Activated CD4-positive, alpha-beta memory T cell treated with anti-CD3 and anti-CD28 coated beads, Interleukin-2, amount 10 ng/mL, durations not matched to agents 7 days and 5 days (primary cell): ENCODE measurements at regions of chr1 and their contacts with region 1.

Region 1: DNA sequence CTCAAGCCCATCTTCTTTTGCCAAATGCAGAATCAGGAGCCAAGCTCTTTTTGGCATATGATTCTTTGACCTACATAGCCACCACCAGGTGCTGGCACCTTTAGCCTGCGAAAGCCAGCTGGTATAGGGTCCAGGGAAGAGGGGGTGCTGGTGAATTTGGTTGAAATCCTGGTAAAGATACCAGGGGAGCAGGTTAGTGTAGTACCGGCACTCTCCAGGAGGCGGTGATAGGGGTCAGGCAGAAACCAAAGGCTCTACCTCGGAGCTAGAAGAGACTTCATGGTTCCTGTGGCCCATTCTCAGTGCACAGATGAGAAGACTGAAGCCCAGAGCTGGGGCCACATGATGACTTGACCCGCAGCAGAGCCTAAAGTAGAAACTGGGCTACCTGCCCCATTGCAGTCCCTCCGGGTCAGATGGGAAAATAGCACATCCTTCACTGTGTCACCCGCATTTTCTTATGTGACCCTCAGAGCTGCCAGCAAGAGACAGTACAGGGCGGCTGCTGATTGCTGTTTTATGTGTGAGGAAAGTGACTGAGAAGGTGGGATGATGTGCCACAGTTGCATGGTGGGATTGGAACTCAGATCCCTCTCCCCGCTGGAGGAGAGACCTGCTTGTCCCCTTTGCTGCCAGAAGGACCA is 36.0 kb upstream of the IL19 start:
- DNase-seq: peak; percentile 82
- H3K4me3 Mint-ChIP-seq: no peak overlapping the region
- H3K27ac Mint-ChIP-seq: peak overlapping the region; percentile 34
- H3K4me1 Mint-ChIP-seq: peaks cover 71% of the 10 kb centered on the region
- H3K27me3 Mint-ChIP-seq: no peaks in the 10 kb centered on the region

Region 2: DNA sequence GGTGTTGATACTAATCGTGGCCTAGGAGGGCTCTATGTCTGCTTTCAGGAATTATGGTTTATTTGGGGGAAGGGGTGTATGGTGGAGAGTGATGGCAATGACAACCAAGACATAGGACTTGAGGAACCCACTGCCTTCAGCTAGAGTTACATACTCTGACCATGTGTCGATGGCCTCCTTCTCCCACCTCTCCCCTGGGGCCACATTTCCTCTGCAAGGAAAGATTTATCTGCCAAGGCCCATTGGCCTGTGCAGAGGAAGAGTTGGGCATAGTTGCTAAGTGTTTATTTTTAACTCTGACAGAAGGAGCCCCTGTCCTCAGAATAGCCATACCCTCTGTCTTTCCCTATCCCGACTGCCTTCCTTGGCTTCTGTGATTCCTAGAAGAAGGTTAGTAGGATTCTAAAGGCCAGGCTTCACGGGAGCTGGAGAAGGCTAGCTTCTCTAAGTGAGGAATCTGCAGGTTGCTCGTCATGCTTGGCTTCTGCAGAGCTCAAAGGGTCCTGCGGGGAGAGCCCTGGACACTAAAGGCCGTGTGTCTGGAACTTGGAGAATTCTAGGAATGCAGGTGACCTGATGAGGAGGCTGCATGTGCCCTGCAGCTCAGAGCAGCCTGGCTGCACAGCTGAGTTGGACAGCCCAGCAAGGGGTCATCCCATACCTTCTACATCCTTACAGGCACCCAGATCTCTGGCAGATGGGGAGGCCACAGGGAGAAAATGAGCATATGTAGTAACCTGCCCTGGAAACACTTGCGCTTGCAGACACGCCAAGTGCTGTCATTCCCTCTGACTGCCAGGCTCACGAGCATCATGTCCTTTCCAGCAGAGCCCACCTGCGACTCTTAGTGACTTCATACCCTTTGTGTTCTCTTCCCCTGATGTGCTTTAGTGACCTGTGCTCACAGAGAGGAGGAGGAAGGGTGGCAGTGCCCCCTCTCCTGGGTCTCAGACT is 40.2 kb before region 1 on chr1:
- CTCF ChIA-PET with region 1: no interaction called
- POLR2A ChIA-PET with region 1: no interaction called
- DNase-seq: no peak
- H3K4me3 Mint-ChIP-seq: no peak overlapping the region
- H3K27ac Mint-ChIP-seq: no peak overlapping the region
- H3K4me1 Mint-ChIP-seq: peaks cover 54% of the 10 kb centered on the region
- H3K27me3 Mint-ChIP-seq: no peaks in the 10 kb centered on the region

Region 3: DNA sequence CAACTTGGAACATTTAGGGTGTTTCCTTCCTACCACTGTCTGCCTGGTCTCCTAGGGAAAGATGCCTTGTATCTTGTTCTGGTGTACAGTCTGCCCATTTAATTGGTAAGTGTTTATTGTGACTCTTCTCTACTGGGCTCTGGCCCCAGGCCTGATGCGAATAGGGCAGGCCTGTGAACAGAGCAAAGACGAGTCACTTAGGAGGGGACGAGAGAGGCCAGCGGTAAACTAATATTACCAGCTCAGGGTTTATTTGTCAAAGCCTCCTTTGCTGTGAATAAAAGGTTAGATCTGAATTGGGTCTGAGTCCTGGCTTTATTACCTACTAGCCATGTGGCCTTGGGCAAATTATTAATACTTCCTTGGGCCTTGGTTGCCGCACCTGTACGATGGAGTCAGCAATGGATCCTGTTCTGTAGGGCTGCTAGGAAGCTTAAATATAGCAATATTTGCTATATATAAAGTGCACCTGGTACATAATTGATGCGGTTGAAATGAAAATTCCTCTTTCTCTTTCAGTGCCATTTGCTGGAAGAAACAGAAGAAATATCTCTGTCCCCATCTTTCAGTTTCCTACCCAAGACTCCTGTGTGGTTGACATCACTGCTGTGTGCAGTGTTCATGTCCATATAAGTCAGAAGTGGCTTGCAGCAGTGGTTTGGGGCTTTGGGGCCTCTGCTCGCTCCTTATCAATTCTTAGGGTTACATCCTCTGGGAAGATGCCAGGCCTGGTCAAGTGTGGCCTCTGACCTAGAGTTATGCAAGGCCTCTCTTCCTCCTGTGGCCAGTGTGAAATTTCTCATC is 17.5 kb before region 1 on chr1:
- CTCF ChIA-PET with region 1: interaction called, 12 read pairs
- POLR2A ChIA-PET with region 1: interaction called, 3 read pairs
- DNase-seq: peak; percentile 52
- H3K4me3 Mint-ChIP-seq: no peak overlapping the region
- H3K27ac Mint-ChIP-seq: peak overlapping the region; percentile 80
- H3K4me1 Mint-ChIP-seq: peaks cover 78% of the 10 kb centered on the region
- H3K27me3 Mint-ChIP-seq: no peaks in the 10 kb centered on the region

Region 4: DNA sequence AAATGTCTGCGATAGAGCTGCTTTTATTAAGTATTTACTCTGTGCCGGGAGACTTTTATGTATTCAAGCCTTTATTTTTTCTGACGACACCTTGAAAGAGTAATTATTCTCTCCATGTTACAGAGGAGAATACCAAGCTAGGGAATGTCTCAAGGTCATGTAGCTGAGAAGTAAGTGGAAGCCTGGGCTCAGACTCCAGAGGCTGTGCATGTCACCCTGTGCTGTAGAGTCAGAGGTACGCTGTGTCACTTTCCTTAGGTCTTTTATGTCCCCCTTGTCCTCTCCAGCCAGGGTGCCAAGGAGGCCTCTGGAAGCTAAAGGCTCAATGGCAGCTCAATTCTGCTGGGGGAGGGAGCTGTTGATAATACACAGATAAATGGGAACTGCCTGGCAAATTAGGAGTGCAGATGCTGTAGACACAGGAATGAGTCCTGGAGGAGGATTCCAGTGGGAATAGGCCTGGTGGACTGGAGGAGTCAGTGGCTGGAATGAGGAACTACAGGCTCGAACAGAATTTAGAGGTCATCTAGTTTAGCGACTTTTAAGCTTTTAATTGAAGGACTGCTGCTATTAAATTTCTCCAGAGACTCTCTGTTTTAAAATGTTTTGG is 26.6 kb after region 1 on chr1:
- CTCF ChIA-PET with region 1: interaction called, 41 read pairs
- POLR2A ChIA-PET with region 1: interaction called, 14 read pairs
- DNase-seq: no peak
- H3K4me3 Mint-ChIP-seq: no peak overlapping the region
- H3K27ac Mint-ChIP-seq: no peak overlapping the region
- H3K4me1 Mint-ChIP-seq: peaks cover 38% of the 10 kb centered on the region
- H3K27me3 Mint-ChIP-seq: peaks cover 19% of the 10 kb centered on the region

Region 5: DNA sequence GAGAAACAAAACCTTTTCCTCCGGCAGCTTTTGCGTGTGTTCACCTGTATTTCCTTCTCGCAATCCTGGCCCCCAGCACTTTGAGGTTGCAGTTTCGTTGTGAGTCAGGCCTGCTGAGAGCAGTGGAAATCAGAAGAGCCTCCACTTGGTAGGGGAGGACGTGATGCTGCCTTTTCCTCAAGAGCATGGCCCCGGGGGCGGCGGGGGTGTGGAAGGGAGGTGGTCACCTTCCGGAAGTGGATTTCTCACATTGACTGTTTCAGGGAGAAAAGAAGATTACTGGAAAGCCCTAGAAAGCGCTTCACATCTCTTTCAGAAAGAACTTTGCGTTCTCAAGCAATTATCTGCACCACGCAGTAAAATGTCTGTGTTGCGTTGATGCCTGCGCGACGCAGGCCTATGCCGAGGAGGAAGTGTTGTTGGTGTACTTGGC is 49.9 kb after region 1 on chr1:
- CTCF ChIA-PET with region 1: interaction called, 20 read pairs
- POLR2A ChIA-PET with region 1: interaction called, 9 read pairs
- DNase-seq: peak; percentile 94
- H3K4me3 Mint-ChIP-seq: peak overlapping the region; percentile 53
- H3K27ac Mint-ChIP-seq: peak overlapping the region; percentile 90
- H3K4me1 Mint-ChIP-seq: peaks cover 64% of the 10 kb centered on the region
- H3K27me3 Mint-ChIP-seq: peaks cover 22% of the 10 kb centered on the region

Region 6: DNA sequence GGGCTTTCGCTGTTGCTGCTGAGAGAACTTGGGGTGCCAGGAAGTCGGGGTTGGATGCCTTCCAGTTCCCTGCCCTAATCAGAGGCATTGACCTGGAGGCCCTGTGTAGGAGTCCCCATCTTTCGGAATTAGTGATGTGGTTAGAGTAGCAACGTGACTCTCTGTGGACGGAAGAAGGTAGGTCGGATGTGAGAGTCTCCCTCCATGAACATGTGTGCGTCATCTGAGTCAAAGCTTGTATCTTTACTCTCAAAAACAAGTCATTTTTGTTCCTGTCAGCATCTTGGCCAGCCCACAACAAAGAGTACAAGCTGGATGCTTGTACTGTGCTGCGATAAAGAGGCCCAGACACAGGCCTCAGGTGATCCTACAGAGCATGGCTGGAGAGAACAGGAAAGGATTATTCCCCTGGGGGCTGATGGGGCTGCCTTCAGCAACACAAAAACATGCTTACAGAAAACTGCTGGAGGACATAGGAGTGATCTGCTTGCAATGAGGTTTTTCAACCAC is 68.7 kb after region 1 on chr1:
- CTCF ChIA-PET with region 1: interaction called, 276 read pairs
- POLR2A ChIA-PET with region 1: interaction called, 30 read pairs
- DNase-seq: peak; percentile 87
- H3K4me3 Mint-ChIP-seq: peak overlapping the region; percentile 37
- H3K27ac Mint-ChIP-seq: peak overlapping the region; percentile 88
- H3K4me1 Mint-ChIP-seq: peaks cover 86% of the 10 kb centered on the region
- H3K27me3 Mint-ChIP-seq: peaks cover 22% of the 10 kb centered on the region

Region 7: DNA sequence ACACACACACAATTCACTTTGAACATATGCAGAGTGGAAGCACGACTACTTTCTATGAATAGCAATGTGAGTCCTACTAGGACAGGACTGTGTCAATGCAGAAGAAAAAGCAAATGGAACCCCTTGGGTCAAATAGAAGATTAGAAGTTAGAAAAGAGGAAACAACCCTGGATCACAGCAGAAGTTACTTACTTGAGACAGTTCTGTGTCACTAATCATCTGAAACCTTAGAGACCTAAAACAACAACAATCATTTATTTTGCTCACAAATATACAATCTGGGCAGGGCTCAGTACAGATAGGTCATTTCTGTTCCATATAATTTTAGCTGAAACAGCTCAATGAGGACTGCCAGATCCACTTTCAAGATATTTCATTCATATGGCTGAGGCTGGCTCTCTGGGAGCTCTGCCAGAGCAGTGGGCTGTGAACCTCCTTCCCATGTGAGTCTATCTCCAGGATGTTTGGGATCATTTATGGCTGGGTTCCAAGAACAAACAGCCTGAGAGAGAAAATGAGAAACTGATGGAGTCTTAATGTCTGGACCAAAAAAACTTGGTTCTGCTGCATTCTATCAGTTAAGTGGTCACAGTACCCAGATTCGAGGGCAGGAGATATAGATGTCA is 80.2 kb after region 1 on chr1:
- CTCF ChIA-PET with region 1: interaction called, 276 read pairs
- POLR2A ChIA-PET with region 1: interaction called, 17 read pairs
- DNase-seq: no peak
- H3K4me3 Mint-ChIP-seq: no peak overlapping the region
- H3K27ac Mint-ChIP-seq: no peak overlapping the region
- H3K4me1 Mint-ChIP-seq: peaks cover 40% of the 10 kb centered on the region
- H3K27me3 Mint-ChIP-seq: no peaks in the 10 kb centered on the region

Region 8: DNA sequence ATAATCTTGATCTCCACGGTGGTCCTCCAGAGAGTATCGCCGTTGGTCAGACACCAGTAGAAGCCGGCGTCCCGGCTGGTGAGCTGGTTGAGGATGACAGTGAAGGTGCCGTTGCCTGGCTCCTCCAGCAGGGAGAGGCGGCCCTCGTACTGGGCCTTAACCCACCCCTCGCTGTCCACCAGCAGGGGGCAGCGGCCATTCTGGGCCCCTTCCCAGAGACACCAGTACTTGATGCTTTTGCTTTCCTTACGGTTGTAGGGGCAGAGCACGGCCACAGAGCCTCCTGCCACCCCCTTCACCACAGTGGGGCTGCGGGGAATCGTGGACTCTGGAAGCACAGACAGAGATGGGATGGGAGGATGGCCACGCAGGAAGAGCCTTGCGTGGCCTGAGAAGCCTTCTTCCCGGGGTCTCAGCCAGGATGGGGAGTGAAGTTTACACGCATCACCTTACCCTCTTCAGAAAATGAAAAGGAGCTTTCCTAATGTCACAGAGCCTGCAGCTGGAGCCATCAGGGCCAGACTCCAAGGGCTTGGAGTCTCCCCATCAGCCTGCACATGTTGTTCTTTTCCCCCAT is 201.0 kb after region 1 on chr1:
- CTCF ChIA-PET with region 1: interaction called, 14 read pairs
- POLR2A ChIA-PET with region 1: no interaction called
- DNase-seq: peak; percentile 54
- H3K4me3 Mint-ChIP-seq: no peak overlapping the region
- H3K27ac Mint-ChIP-seq: no peak overlapping the region
- H3K4me1 Mint-ChIP-seq: peaks cover 8% of the 10 kb centered on the region
- H3K27me3 Mint-ChIP-seq: no peaks in the 10 kb centered on the region

Region 9: GRCh38 chr1:207052911-207053769 is 318.5 kb after region 1 on chr1 and contains the start of gene PFKFB2:
- CTCF ChIA-PET with region 1: no interaction called
- POLR2A ChIA-PET with region 1: no interaction called
- DNase-seq: peak; percentile 93
- H3K4me3 Mint-ChIP-seq: peak within 1 kb of the TSS; percentile 79
- H3K27ac Mint-ChIP-seq: peak within 1 kb of the TSS; percentile 71
- H3K4me1 Mint-ChIP-seq: peaks cover 51% of the 10 kb centered on the region
- H3K27me3 Mint-ChIP-seq: peaks cover 22% of the 10 kb centered on the region
- total RNA-seq, gene PFKFB2: 1.5 to 1.7 TPM